ENCODE measurements at regions of chrX and their contacts with region 1.

Region 1: DNA sequence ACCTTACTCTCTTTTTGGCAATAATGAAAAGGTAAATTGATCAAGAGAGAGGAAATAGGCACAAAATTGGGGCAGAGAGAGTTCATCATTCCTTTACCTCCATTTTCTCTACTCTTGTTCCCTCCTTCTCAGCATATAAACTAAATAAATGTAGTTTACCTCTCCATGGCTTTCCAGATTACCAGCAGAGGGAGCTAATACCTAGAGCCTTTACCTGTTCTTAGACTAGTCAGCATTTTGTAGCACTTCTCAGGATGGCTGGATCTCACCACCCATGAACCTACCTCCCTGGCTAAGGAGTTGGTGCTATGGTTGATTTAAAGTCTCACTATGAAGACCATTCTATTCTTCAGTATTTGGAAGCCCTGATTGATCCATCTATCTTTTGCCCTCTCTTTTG is 15.7 kb downstream of the OFD1 start:
- DNase-seq: no peak

Region 2: DNA sequence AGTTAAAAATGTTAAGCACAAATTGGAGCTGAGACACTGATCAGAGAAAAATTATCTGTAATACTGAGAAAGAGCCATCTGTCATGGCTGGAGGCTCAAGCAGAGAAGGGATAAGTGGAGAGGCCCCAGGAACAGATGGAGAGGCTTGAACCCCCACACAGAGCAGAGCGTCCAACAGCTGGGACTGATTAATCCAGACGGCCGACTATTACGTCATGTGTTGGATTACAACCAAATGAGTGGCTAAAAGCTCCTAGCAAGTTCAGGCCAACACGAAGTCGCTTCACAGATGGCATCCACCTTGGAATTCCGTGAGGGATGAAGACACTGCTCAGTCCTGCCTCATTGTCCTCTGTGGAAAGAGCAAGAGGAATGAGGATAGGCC is 372.7 kb before region 1 on chrX:
- intact Hi-C with region 1: no loop called
- DNase-seq: no peak

Region 3: DNA sequence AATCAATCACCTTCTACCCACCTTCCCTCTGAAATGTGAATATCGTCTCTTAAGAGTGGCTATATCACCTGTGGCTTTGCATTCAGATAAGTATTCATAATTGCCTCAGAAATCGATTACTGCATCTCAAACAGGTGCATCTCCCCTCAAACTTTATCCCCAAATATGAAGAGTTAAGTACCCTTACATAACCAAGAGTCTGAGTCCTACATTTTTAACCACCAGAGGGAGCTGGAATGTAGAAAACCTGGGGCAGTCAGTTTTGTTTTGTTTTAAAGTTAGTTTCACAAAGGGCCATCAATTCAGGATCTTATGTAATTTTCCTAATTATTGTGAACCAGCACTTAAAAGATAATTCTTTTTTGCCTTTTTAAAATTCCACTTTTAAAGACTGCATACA is 91.6 kb before region 1 on chrX:
- intact Hi-C with region 1: loop called (anchors 5 kb)
- DNase-seq: no peak

Region 4: GRCh38 chrX:13797512-13797911 is 47.3 kb after region 1 on chrX:
- intact Hi-C with region 1: no loop called
- DNase-seq: no peak

Region 5: GRCh38 chrX:14064626-14065432 is 314.6 kb after region 1 on chrX:
- intact Hi-C with region 1: no loop called
- DNase-seq: no peak